Activated CD4-positive, alpha-beta memory T cell treated with anti-CD3 and anti-CD28 coated beads, Interleukin-2, amount 10 ng/mL, durations not matched to agents 7 days and 5 days (primary cell): ENCODE measurements at regions of chr9 and their contacts with region 1.

Region 1: DNA sequence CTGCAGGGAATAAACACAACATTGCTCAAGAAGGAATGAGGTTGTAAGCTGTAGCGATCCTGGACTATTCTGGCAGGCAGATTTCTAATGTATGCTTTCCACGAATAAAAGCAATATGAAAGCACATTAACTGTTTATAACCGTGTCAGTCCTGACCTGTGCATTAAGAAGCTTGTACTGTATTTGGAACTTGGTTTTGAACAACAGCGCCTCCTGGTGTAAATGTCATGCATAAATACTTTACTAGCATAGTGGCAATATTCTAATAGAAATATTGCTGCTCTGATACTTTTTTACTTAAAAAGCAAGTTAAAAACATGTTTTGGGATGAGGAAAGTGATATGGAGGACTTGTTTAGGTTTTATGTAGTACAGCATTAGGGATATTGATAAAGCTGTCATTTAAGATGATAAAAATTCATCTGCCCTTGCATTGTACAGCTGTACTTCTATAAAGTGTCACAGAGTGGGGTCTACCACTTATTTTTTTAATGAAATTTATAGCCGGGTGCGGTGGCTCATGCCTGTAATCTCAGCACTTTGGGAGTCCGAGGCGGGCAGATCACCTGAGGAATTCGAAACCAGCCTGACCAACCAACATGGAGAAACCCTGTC is 70.7 kb upstream of the GNE start:
- DNase-seq: peak; percentile 38
- H3K4me3 Mint-ChIP-seq: no peak overlapping the region
- H3K27ac Mint-ChIP-seq: no peak overlapping the region
- H3K4me1 Mint-ChIP-seq: peaks cover 6% of the 10 kb centered on the region
- H3K27me3 Mint-ChIP-seq: no peaks in the 10 kb centered on the region

Region 2: GRCh38 chr9:36250079-36250478 is 78.8 kb before region 1 on chr9:
- CTCF ChIA-PET with region 1: interaction called, 42 read pairs
- POLR2A ChIA-PET with region 1: no interaction called
- DNase-seq: no peak
- H3K4me3 Mint-ChIP-seq: no peak overlapping the region
- H3K27ac Mint-ChIP-seq: no peak overlapping the region
- H3K4me1 Mint-ChIP-seq: peaks cover 13% of the 10 kb centered on the region
- H3K27me3 Mint-ChIP-seq: no peaks in the 10 kb centered on the region

Region 3: DNA sequence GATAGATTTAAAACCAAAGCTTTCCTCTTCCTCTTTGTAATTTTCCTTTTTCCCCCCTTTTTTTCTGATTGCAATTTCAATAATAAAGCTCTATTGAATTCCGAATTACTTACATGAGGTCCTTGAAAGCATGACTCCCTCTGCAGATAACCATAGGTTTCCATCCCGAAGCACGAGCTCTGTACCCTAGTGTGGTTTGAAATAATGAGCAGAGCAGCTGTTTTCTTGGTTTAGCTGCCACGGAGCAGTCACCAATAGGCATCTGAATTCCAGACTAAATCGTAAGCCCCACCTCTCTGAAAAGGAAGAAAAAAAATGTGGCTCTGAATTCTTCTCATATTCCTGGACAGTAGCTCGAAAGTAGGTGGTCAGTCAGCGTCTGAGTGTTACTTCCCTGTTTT is 52.1 kb before region 1 on chr9:
- CTCF ChIA-PET with region 1: no interaction called
- POLR2A ChIA-PET with region 1: no interaction called
- DNase-seq: no peak
- H3K4me3 Mint-ChIP-seq: no peak overlapping the region
- H3K27ac Mint-ChIP-seq: no peak overlapping the region
- H3K4me1 Mint-ChIP-seq: no peaks in the 10 kb centered on the region
- H3K27me3 Mint-ChIP-seq: no peaks in the 10 kb centered on the region

Region 4: GRCh38 chr9:36470643-36471290 is 141.9 kb after region 1 on chr9:
- CTCF ChIA-PET with region 1: no interaction called
- POLR2A ChIA-PET with region 1: no interaction called
- DNase-seq: peak; percentile 73
- H3K4me3 Mint-ChIP-seq: peak overlapping the region; percentile 78
- H3K27ac Mint-ChIP-seq: peak overlapping the region; percentile 87
- H3K4me1 Mint-ChIP-seq: peaks cover 36% of the 10 kb centered on the region
- H3K27me3 Mint-ChIP-seq: no peaks in the 10 kb centered on the region